ENCODE measurements at regions of chr1 and their contacts with region 1.

Region 1: GRCh38 chr1:113442131-113442530 is 51.8 kb downstream of the MAGI3 start:
- DNase-seq: no peak
- H3K4me3 ChIP-seq: no peak overlapping the region
- H3K27ac ChIP-seq: no peak overlapping the region
- H3K4me1 ChIP-seq: peaks cover 0 to 6% (median 2%) of the 10 kb centered on the region in 4 experiments; a peak in 2 of 7 replicates
- H3K27me3 ChIP-seq: no peaks in the 10 kb centered on the region
- CTCF ChIP-seq: no peak
- EP300 ChIP-seq: no peak
- POLR2A ChIP-seq: no peak
- RAD21 ChIP-seq: no peak

Region 2: DNA sequence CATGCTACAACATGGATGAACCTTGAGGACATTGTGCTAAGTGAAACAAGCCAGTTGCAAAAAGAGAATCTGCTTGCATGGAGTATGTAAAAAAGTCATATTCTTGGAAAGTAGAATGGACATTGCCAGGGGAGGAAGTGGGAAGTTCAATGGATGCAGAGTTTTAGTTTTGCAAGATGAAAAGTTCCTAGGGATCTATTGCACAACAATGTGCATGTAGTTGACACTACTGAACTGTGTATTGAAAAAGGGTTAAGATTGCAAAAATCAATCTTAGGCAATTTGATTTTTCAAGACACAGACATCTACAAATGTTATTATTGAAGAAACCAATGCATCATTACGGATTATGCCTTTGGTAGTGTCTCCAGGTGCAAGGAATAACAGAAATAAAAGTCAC is 102.1 kb before region 1 on chr1:
- CTCF ChIA-PET with region 1: no interaction called
- POLR2A ChIA-PET with region 1: no interaction called
- DNase-seq: no peak
- H3K4me3 ChIP-seq: no peak overlapping the region
- H3K27ac ChIP-seq: no peak overlapping the region
- H3K4me1 ChIP-seq: no peaks in the 10 kb centered on the region
- H3K27me3 ChIP-seq: no peaks in the 10 kb centered on the region
- CTCF ChIP-seq: no peak
- EP300 ChIP-seq: no peak
- POLR2A ChIP-seq: no peak
- RAD21 ChIP-seq: no peak

Region 3: GRCh38 chr1:113452921-113453770 is 11.0 kb after region 1 on chr1:
- CTCF ChIA-PET with region 1: interaction called, 10 read pairs
- POLR2A ChIA-PET with region 1: no interaction called
- DNase-seq: no peak
- H3K4me3 ChIP-seq: no peak overlapping the region
- H3K27ac ChIP-seq: no peak overlapping the region
- H3K4me1 ChIP-seq: no peaks in the 10 kb centered on the region; a peak in 1 of 7 replicates
- H3K27me3 ChIP-seq: no peaks in the 10 kb centered on the region
- CTCF ChIP-seq: peak in 2 of 3 experiments; percentile 26 to 57; a peak in 2 of 4 replicates
- EP300 ChIP-seq: no peak
- POLR2A ChIP-seq: no peak
- RAD21 ChIP-seq: peak; percentile 62 to 64

Region 4: DNA sequence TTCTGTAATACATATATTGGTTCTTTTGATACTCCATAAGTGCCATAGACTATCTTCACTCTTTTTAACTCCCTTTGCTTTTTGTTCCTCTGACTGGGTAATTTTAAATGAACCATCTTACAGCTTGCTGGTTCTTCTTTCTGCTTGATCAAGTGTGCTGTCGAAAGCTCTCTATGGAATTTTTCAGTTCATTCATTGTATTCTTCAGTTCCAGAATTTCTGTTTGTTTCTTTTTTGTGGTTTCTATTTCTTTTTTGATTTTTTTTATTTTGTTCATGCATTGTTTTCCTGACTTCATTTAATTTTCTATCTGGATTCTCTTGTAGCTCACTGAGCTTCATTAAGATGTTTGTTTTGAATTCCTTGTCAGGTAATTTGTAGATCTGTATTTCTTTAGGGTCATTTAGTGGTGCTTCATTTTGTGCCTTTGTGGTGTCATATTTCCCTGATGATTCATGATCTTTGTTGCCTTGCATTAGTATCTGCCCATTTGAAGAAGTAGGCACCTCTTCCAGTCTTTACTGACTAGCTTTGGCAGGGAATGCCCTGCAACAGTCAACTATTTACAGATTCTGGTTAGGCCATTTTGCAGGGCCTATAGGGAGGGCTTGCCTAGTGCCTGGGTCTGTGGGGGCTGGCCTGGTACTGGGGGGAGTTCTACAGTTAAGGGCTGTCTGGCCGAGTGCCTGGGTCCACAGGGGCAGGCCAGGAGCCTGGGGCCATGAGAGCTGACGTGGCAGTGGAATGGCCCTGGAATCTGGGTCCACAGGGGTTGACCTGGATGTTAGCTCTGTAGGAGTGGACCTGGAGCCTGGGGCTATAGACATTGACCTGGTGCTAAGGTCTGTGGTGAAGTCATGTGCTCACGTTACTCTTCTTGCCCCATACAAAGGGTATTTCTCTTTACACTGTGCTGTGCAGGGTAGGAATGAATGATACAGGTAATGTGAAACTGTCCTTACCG is 37.9 kb after region 1 on chr1:
- CTCF ChIA-PET with region 1: no interaction called
- POLR2A ChIA-PET with region 1: no interaction called
- DNase-seq: no peak
- H3K4me3 ChIP-seq: no peak overlapping the region
- H3K27ac ChIP-seq: no peak overlapping the region
- H3K4me1 ChIP-seq: no peaks in the 10 kb centered on the region
- H3K27me3 ChIP-seq: no peaks in the 10 kb centered on the region
- CTCF ChIP-seq: no peak
- EP300 ChIP-seq: no peak
- POLR2A ChIP-seq: no peak
- RAD21 ChIP-seq: no peak

Region 5: GRCh38 chr1:113557177-113557576 is 115.0 kb after region 1 on chr1:
- CTCF ChIA-PET with region 1: no interaction called
- POLR2A ChIA-PET with region 1: no interaction called
- DNase-seq: no peak
- H3K4me3 ChIP-seq: no peak overlapping the region
- H3K27ac ChIP-seq: no peak overlapping the region
- H3K4me1 ChIP-seq: no peaks in the 10 kb centered on the region
- H3K27me3 ChIP-seq: no peaks in the 10 kb centered on the region
- CTCF ChIP-seq: no peak
- EP300 ChIP-seq: no peak
- POLR2A ChIP-seq: no peak
- RAD21 ChIP-seq: no peak

Measured in H1 (cell line).